Stomach (tissue), 19 donors: ENCODE measurements at regions of chr3 and their contacts with region 1.

Region 1: GRCh38 chr3:157081681-157082210 is 78.2 kb downstream of the CCNL1 start:
- DNase-seq: peak; percentile 89 to 94
- H3K4me3 ChIP-seq: no peak overlapping the region
- H3K27ac ChIP-seq: peak overlapping the region in 1 of 5 donors; percentile 55
- H3K4me1 ChIP-seq: peaks cover 3 to 37% (median 10%) of the 10 kb centered on the region in 4 donors
- H3K27me3 ChIP-seq: no peaks in the 10 kb centered on the region
- CTCF ChIP-seq: peak in 6 of 7 experiments; percentile 58 to 100 (median 93)
- EP300 ChIP-seq: no peak
- POLR2A ChIP-seq: no peak

Region 2: GRCh38 chr3:156547637-156548036 is 534.1 kb before region 1 on chr3:
- intact Hi-C with region 1: loop called (anchors 10 kb)
- DNase-seq: no peak
- H3K4me3 ChIP-seq: no peak overlapping the region
- H3K27ac ChIP-seq: peak overlapping the region in 1 of 5 donors; percentile 40
- H3K4me1 ChIP-seq: peaks cover 4 to 75% (median 42%) of the 10 kb centered on the region in 4 donors
- H3K27me3 ChIP-seq: no peaks in the 10 kb centered on the region
- CTCF ChIP-seq: no peak
- EP300 ChIP-seq: no peak
- POLR2A ChIP-seq: no peak

Region 3: GRCh38 chr3:156674046-156674910 is 407.5 kb before region 1 on chr3 and contains the start of gene TIPARP:
- intact Hi-C with region 1: loop called (anchors 10 kb)
- DNase-seq: peak; percentile 100
- H3K4me3 ChIP-seq: peak within 1 kb of the TSS; percentile 69 to 95 (median 84)
- H3K27ac ChIP-seq: peak within 1 kb of the TSS; percentile 91 to 98 (median 96)
- H3K4me1 ChIP-seq: peaks cover 0 to 46% (median 21%) of the 10 kb centered on the region in 4 donors
- H3K27me3 ChIP-seq: no peaks in the 10 kb centered on the region
- CTCF ChIP-seq: peak in 6 of 7 experiments; percentile 6 to 92 (median 68)
- EP300 ChIP-seq: peak; percentile 11
- POLR2A ChIP-seq: peak in 2 of 4 donors; percentile 94 to 98
- total RNA-seq, gene TIPARP: 7.2 to 73.4 (median 40.6) TPM

Region 4: DNA sequence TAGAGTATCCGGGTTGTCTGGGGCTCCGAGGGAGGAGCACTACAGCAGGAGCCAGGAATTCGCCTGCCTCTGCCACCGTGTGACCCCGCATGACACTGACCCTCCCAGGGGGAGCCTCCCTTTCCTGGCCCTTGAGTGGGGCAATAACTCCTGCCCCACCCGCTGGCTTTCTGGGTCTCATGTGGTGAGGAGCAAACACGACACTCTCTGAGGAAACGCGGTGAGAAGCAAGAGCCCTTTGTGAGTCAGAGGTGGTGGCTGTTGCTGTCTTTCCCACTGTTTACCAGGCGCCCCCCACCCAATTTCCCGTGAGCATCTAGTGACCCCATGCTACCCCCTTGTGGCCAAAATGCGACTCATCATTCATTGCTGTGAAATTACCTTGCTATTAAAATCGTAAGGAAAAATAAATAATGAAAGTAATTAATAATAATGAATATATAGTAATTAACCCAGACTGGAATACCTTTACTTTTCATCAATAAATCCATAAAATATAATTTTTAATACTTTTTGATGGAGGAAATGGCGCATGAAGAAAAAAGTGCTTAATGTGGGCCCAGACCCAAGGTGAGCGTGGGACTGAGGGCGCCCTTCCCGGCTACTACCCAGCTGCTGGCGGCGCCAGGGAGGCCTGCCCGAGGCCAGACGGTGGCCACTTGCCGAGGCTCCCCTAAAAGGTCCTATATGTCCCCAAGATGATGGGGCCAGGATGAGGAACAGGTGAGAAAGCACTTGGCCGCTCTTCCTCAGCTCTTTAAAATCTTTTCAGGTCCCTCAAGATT is 48.9 kb after region 1 on chr3:
- intact Hi-C with region 1: loop called (anchors 10 kb)
- DNase-seq: peak; percentile 63 to 86
- H3K4me3 ChIP-seq: peak overlapping the region in 2 of 4 donors; percentile 1 to 26
- H3K27ac ChIP-seq: peak overlapping the region; percentile 80 to 92 (median 85)
- H3K4me1 ChIP-seq: peaks cover 49 to 84% (median 68%) of the 10 kb centered on the region in 4 donors
- H3K27me3 ChIP-seq: no peaks in the 10 kb centered on the region
- CTCF ChIP-seq: peak in 5 of 7 experiments; percentile 22 to 60 (median 43)
- EP300 ChIP-seq: no peak
- POLR2A ChIP-seq: no peak